ENCODE measurements at regions of chr7 and their contacts with region 1.

Region 1: GRCh38 chr7:44565097-44565794 is 8.5 kb downstream of the DDX56 start:
- DNase-seq: peak; percentile 84
- ATAC-seq: peak; percentile 83

Region 2: GRCh38 chr7:44240983-44241510 is 324.2 kb before region 1 on chr7:
- intact Hi-C with region 1: loop called (anchors 5 kb)
- DNase-seq: no peak
- ATAC-seq: peak; percentile 84

Region 3: GRCh38 chr7:44377681-44378421 is 187.4 kb before region 1 on chr7:
- intact Hi-C with region 1: loop called (anchors 5 kb)
- DNase-seq: no peak
- ATAC-seq: no peak

Region 4: DNA sequence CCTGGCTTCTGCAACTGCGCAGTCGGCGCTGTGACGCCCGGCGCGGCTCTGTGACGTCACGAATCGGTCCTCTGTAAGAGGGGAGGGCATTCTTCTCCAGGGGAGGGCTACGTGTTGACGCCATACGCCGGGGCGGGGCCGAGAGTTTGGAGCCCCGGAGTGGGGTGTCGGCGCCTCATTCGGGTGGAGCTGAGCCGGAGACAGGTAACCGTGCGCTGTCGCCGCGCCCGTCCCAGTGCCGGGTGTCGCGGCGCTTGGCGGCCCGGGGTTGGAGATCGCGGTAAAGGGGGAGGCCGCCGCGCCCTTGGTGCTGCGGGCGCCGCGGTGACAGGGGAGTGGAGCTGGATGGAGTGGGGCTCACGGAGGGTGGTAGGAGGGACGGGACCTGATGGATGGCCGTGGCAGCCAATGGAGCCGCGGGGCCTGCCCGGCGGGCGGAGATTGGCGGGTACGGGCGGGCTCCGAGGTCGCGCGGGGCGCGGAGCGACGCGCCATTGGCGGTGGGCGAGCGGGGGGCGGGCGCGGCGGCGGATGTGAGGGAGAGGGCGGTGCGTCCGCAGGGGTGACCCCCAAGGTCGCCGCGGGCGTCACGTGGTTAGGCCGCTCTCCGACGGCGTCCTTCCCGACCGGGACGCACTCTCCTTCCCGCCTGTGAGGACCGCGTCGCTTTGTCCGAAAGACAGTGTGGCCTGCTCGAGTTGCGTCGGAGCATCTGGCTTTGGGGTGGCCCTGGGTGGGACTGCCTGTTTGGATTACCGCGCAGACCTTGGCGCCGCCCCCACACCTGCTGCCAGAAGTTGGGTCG is 41.4 kb after region 1 on chr7 and contains the start of gene OGDH:
- intact Hi-C with region 1: no loop called
- DNase-seq: peak; percentile 100
- ATAC-seq: peak; percentile 98
- total RNA-seq, gene OGDH: 679 TPM